Activated B cell treated with CpG ODN at 0.5 μM for 24 hours (primary cell): ENCODE measurements at regions of chr7 and their contacts with region 1.

Region 1: DNA sequence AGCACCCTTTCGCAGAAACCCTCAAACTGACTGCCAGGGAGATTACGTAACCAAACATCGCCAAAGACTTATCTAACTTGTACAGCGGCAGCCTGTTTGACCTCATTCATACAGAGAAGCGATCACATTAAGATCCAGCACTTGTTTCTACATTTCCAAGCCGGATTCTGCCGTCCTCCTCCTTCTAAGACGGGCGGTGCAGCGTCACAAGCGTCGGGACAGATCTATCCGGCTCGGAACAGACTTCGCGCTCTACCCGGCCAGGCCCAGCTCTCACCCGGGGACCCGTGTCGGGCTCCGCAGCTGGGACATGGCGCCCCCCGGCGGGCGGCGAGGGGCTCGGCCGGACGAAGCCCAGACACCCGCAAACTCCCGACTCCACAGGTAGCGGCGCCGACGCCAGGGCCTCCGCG is 373 bp downstream of the H2AZ2 start:
- DNase-seq: peak; percentile 90
- ATAC-seq: peak; percentile 65
- H3K4me3 Mint-ChIP-seq: peak overlapping the region; percentile 96
- H3K27ac Mint-ChIP-seq: peak overlapping the region; percentile 97
- H3K4me1 Mint-ChIP-seq: peaks cover 33% of the 10 kb centered on the region
- H3K27me3 Mint-ChIP-seq: no peaks in the 10 kb centered on the region
- CTCF ChIP-seq: no peak

Region 2: DNA sequence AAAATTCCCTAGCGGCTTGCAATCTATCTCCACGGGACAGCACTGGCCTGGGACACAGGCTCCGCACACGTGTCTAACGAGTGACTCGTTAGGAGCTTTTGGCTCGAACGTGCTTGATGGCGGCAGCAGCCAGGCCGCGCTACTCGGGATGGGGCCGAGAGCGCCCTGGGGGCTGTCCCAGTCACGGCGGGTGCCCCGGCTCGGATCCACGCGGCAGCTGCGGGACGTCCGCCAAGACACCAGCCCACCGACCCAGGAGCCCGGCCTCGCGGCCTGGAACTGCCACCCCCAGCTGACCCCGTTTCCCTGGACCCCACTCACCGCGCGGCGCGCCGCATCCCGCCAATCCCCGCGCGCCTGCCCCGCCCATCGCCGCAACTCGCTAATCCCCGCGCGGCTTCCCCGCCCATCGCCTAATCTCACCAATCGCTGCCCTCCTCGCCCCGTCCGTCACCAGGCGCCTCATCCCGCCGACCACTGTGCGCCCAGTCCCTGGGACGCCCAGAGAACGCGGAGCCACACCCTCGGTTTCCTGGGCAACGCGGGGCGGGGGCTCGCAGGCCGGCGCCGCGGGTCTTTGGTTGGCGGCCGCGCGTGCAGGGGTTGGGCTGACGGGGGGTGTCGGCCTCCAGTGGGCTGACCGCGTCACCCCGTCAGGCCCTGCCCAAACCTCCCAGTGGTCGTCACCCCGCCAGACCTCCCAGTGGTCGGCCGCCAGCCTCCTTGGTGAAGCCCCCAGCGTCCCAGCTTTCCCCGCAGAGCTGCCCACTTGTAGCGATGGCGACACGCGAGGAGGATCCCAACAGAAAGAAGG is 724.1 kb before region 1 on chr7 and contains the start of gene POLD2:
- CTCF ChIA-PET with region 1: no interaction called
- POLR2A ChIA-PET with region 1: no interaction called
- intact Hi-C with region 1: loop called (anchors 5 kb)
- DNase-seq: peak; percentile 96
- ATAC-seq: peak; percentile 98
- H3K4me3 Mint-ChIP-seq: peak within 1 kb of the TSS; percentile 88
- H3K27ac Mint-ChIP-seq: peak within 1 kb of the TSS; percentile 79
- H3K4me1 Mint-ChIP-seq: peaks cover 25% of the 10 kb centered on the region
- H3K27me3 Mint-ChIP-seq: no peaks in the 10 kb centered on the region
- CTCF ChIP-seq: no peak
- total RNA-seq, gene POLD2: 146 and 147 TPM in 2 replicates

Region 3: GRCh38 chr7:44573464-44574286 is 273.8 kb before region 1 on chr7 and contains the start of gene DDX56:
- CTCF ChIA-PET with region 1: interaction called, 3 read pairs
- POLR2A ChIA-PET with region 1: interaction called, 15 read pairs
- intact Hi-C with region 1: no loop called
- DNase-seq: peak; percentile 82
- ATAC-seq: peak; percentile 97
- H3K4me3 Mint-ChIP-seq: peak within 1 kb of the TSS; percentile 94
- H3K27ac Mint-ChIP-seq: peak within 1 kb of the TSS; percentile 94
- H3K4me1 Mint-ChIP-seq: peaks cover 35% of the 10 kb centered on the region
- H3K27me3 Mint-ChIP-seq: no peaks in the 10 kb centered on the region
- CTCF ChIP-seq: no peak
- total RNA-seq, gene DDX56: 92.6 and 99.7 TPM in 2 replicates

Region 4: GRCh38 chr7:44638611-44639557 is 208.6 kb before region 1 on chr7:
- CTCF ChIA-PET with region 1: interaction called, 3 read pairs
- POLR2A ChIA-PET with region 1: interaction called, 28 read pairs
- intact Hi-C with region 1: loop called (anchors 1 kb)
- DNase-seq: peak; percentile 69
- ATAC-seq: peak; percentile 82
- H3K4me3 Mint-ChIP-seq: peak overlapping the region; percentile 84
- H3K27ac Mint-ChIP-seq: peak overlapping the region; percentile 97
- H3K4me1 Mint-ChIP-seq: peaks cover 64% of the 10 kb centered on the region
- H3K27me3 Mint-ChIP-seq: no peaks in the 10 kb centered on the region
- CTCF ChIP-seq: no peak

Region 5: GRCh38 chr7:44858161-44858560 is 10.6 kb after region 1 on chr7:
- CTCF ChIA-PET with region 1: interaction called, 8 read pairs
- POLR2A ChIA-PET with region 1: interaction called, 12 read pairs
- intact Hi-C with region 1: no loop called
- DNase-seq: no peak
- ATAC-seq: no peak
- H3K4me3 Mint-ChIP-seq: no peak overlapping the region
- H3K27ac Mint-ChIP-seq: no peak overlapping the region
- H3K4me1 Mint-ChIP-seq: peaks cover 4% of the 10 kb centered on the region
- H3K27me3 Mint-ChIP-seq: peaks cover 2% of the 10 kb centered on the region
- CTCF ChIP-seq: no peak

Region 6: DNA sequence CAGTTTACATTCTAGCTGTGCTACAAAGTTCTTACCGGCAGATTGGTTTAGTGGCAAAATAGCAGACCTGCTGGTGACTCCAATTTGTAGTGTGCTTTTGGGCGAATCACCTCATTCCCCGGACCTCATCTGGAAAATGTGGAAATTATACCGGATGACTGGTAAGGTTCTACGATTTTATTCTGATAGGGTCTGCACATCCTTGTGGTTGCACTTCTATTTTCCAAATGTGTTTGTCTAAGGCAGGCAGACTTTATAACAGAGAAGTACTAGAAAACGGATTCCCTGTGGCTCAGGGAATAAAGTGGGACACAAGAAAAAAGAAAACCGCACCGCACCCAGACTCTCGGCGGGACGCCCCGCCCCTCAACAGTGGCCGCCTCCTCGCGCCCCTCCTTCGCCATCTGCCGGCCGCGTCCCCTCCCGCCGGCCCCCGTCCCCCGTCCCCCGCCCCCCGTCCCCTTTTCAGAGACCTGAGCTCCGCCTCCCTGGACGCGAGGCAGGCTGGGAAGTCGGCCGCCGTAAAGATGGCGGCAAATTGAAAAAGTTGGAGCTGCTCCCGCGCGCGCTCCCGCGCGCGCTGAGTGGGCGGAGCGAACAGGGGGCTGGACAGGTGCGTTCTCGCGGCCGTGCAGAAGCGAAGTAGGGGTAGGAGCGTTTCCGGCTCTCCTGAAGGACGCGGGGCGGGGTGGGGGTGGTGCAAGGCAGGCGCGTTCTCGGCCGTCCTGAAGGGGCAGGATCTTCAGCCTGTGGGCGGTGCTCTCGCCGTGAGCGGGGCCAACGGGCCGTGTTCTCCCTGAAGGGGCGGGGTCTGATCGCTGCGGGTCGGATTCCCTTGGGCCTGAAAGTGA is 152.0 kb after region 1 on chr7:
- CTCF ChIA-PET with region 1: no interaction called
- POLR2A ChIA-PET with region 1: interaction called, 10 read pairs
- intact Hi-C with region 1: loop called (anchors 1 kb)
- DNase-seq: peak; percentile 94
- ATAC-seq: peak; percentile 85
- H3K4me3 Mint-ChIP-seq: peak overlapping the region; percentile 95
- H3K27ac Mint-ChIP-seq: peak overlapping the region; percentile 94
- H3K4me1 Mint-ChIP-seq: peaks cover 60% of the 10 kb centered on the region
- H3K27me3 Mint-ChIP-seq: no peaks in the 10 kb centered on the region
- CTCF ChIP-seq: no peak